ENCODE measurements at regions of chr12 and their contacts with region 1.

Region 1: GRCh38 chr12:121499929-121500793 is 80.7 kb downstream of the KDM2B start:
- DNase-seq: peak; percentile 21
- ATAC-seq: peak; percentile 96
- H3K4me3 ChIP-seq: peak overlapping the region; percentile 2 to 17; a peak in 3 of 4 replicates
- H3K27ac ChIP-seq: no peak overlapping the region
- H3K4me1 ChIP-seq: peaks cover 6 to 17% of the 10 kb centered on the region in 2 experiments; a peak in 3 of 4 replicates
- H3K27me3 ChIP-seq: no peaks in the 10 kb centered on the region
- CTCF ChIP-seq: peak; percentile 85 to 98 (median 86)
- POLR2A ChIP-seq: no peak
- RAD21 ChIP-seq: peak; percentile 78

Region 2: GRCh38 chr12:120978296-120979219 is 521.6 kb before region 1 on chr12 and contains the start of gene HNF1A:
- CTCF ChIA-PET with region 1: no interaction called
- POLR2A ChIA-PET with region 1: no interaction called
- RAD21 ChIA-PET with region 1: no interaction called
- intact Hi-C with region 1: no loop called
- DNase-seq: no peak
- ATAC-seq: no peak
- H3K4me3 ChIP-seq: no peak within 1 kb of the TSS
- H3K27ac ChIP-seq: no peak within 1 kb of the TSS
- H3K4me1 ChIP-seq: no peaks in the 10 kb centered on the region
- H3K27me3 ChIP-seq: no peaks in the 10 kb centered on the region
- CTCF ChIP-seq: no peak
- POLR2A ChIP-seq: no peak
- RAD21 ChIP-seq: no peak
- total RNA-seq, gene HNF1A: not detected

Region 3: GRCh38 chr12:121467115-121467793 is 32.9 kb before region 1 on chr12:
- CTCF ChIA-PET with region 1: no interaction called
- POLR2A ChIA-PET with region 1: no interaction called
- RAD21 ChIA-PET with region 1: no interaction called
- intact Hi-C with region 1: no loop called
- DNase-seq: peak; percentile 69
- ATAC-seq: peak; percentile 95
- H3K4me3 ChIP-seq: peak overlapping the region; percentile 50 to 62
- H3K27ac ChIP-seq: peak overlapping the region; percentile 78
- H3K4me1 ChIP-seq: peaks cover 9 to 39% of the 10 kb centered on the region in 2 experiments; a peak in 3 of 4 replicates
- H3K27me3 ChIP-seq: no peaks in the 10 kb centered on the region
- CTCF ChIP-seq: no peak
- POLR2A ChIP-seq: peak; percentile 51
- RAD21 ChIP-seq: no peak

Region 4: GRCh38 chr12:121626087-121626852 is 126.1 kb after region 1 on chr12 and contains the start of gene ORAI1:
- CTCF ChIA-PET with region 1: no interaction called
- POLR2A ChIA-PET with region 1: no interaction called
- RAD21 ChIA-PET with region 1: no interaction called
- intact Hi-C with region 1: loop called (anchors 5 kb)
- DNase-seq: peak; percentile 83
- ATAC-seq: peak; percentile 79
- H3K4me3 ChIP-seq: peak within 1 kb of the TSS; percentile 86 to 87
- H3K27ac ChIP-seq: peak within 1 kb of the TSS; percentile 79
- H3K4me1 ChIP-seq: peaks cover 30 to 48% of the 10 kb centered on the region in 2 experiments
- H3K27me3 ChIP-seq: no peaks in the 10 kb centered on the region
- CTCF ChIP-seq: no peak
- POLR2A ChIP-seq: no peak
- RAD21 ChIP-seq: no peak
- total RNA-seq, gene ORAI1: 20.2 TPM

Region 5: DNA sequence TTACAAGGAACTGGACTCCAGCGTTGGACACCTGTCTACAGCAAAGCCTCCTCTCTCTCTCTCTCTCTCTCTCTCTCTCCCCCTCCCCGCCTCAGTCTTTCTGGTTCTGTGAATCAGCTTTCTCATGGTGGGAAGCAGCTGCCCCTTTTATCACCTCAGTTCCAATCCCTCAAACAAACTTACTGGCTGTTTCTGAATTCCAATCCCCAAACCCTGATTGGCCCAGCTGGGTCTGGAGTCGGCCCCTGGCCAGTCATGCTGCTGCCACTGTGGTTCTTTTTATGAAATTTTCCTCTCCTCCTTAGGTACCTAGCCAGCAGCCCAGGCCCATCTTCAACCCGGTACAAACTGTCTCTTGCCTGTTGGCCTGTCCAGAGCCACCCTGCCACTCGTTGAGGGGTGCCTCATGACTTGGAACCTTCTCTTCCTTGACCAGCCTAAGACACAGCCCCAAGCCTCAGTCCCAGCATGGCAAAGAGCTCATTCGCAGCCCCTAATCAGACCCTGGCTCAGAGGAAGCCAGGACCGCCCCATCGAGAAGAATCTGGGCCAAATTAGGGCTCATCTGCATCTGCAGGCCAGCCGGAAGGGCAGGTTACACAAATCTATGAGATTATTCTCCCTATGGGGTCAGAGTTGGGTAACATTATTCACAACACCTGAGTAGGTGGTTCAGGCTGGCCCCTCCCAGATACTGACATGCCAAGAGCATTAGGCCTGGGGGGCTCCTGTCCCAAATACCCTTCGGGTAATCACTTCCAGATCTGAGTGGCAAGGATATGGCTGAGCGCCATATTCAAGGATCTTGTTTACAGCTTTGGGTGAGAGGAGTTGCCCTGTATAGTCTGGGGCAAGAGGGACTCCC is 178.8 kb after region 1 on chr12:
- CTCF ChIA-PET with region 1: interaction called, 4 read pairs
- POLR2A ChIA-PET with region 1: no interaction called
- RAD21 ChIA-PET with region 1: no interaction called
- intact Hi-C with region 1: loop called (anchors 1 kb)
- DNase-seq: no peak
- ATAC-seq: no peak
- H3K4me3 ChIP-seq: no peak overlapping the region
- H3K27ac ChIP-seq: no peak overlapping the region
- H3K4me1 ChIP-seq: peaks cover 0 to 3% of the 10 kb centered on the region in 2 experiments; a peak in 1 of 4 replicates
- H3K27me3 ChIP-seq: no peaks in the 10 kb centered on the region
- CTCF ChIP-seq: no peak
- POLR2A ChIP-seq: no peak
- RAD21 ChIP-seq: no peak

Measured in HCT116 (cell line).